ENCODE measurements at regions of chr12 and their contacts with region 1.

Region 1: DNA sequence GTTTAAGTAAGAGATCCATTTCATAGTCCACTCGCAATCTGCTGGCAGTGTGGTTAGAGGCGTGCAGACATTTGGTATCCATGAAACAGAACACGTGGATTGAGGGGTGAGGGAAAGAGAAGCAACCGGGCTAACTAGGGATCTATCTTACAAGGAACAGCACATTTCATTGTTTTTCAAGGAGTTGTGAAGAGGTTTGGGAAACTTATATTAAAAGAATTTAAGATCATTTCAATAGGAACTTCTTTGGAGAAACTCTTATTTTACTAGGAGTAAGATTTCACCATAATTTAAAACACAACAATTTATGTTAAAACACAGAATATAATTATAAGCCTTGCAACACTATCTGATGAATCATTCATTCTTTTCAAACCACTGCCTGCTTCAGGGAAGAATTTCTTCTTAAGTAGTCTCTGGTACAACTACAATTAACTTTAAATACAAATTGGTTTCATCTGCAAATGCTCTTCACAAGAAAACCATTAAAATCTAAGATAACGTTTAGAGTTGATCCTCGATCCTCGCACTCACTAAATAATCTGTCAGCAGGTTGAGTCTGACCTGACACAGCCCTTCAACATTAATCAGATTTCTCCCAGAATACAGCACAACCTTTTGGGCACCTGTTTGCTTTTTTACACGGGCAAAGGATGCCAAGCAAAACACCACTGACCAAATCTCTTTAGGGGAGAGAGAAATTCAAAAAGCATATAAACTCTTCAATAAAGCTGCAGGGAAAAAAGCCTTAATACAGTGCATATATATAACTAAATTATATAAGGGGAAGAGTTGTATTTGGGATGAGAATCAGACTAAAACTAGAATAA is 27.3 kb downstream of the PPTC7 start:
- DNase-seq: no peak
- H3K4me3 ChIP-seq: no peak overlapping the region
- H3K4me3 Mint-ChIP-seq: peak overlapping the region in 1 of 8 donors; percentile 3
- H3K27ac ChIP-seq: no peak overlapping the region
- H3K27ac Mint-ChIP-seq: peak overlapping the region in 4 of 7 donors; percentile 17 to 71 (median 25)
- H3K4me1 ChIP-seq: peaks cover 44% of the 10 kb centered on the region
- H3K4me1 Mint-ChIP-seq: peaks cover 35 to 62% (median 51%) of the 10 kb centered on the region in 4 donors
- H3K27me3 ChIP-seq: no peaks in the 10 kb centered on the region
- H3K27me3 Mint-ChIP-seq: no peaks in the 10 kb centered on the region

Region 2: DNA sequence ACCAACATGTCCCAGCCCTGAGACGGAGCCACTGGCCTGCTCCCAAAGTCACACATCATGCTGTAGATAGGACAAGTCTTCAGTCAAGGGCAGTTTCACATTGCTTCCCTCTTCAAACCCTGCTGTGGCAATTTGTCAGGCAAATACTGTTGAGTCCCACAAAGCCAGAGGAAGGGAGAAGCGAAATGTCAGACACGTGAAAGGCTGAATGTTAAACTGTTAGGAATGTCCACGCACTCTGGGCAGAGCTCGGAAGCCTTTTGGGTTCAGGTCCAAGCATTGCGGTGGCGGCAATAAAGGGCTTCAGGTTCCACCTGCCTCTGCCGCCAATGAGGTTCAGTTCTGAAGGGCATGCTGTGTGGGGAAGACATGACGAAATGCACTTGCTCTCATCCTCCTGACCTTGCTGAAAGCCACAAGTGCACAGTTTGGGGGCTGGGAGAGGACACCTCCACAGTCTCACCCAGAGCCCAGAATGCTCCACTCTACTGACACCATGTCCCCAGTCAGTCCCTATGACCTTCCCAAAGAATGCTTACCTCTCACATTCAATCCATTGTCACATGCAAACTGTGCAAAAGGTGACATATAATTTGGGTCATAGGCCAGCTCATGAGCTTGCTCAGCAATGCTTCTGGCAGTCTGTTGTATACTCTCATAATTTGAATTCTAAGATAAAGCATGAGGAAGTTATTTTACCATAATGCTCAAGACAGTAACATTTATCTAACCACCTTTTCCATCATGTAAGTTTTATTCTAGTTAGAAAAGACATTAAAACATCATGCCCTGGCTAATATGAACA is 18.0 kb before region 1 on chr12:
- CTCF ChIA-PET with region 1: interaction called, 11 read pairs
- POLR2A ChIA-PET with region 1: interaction called, 3 read pairs
- intact Hi-C with region 1: no loop called
- DNase-seq: no peak
- H3K4me3 ChIP-seq: no peak overlapping the region
- H3K4me3 Mint-ChIP-seq: no peak overlapping the region
- H3K27ac ChIP-seq: no peak overlapping the region
- H3K27ac Mint-ChIP-seq: peak overlapping the region in 1 of 7 donors; percentile 35
- H3K4me1 ChIP-seq: no peaks in the 10 kb centered on the region
- H3K4me1 Mint-ChIP-seq: peaks cover 0 to 2% (median 1%) of the 10 kb centered on the region in 4 donors
- H3K27me3 ChIP-seq: no peaks in the 10 kb centered on the region
- H3K27me3 Mint-ChIP-seq: no peaks in the 10 kb centered on the region

Region 3: DNA sequence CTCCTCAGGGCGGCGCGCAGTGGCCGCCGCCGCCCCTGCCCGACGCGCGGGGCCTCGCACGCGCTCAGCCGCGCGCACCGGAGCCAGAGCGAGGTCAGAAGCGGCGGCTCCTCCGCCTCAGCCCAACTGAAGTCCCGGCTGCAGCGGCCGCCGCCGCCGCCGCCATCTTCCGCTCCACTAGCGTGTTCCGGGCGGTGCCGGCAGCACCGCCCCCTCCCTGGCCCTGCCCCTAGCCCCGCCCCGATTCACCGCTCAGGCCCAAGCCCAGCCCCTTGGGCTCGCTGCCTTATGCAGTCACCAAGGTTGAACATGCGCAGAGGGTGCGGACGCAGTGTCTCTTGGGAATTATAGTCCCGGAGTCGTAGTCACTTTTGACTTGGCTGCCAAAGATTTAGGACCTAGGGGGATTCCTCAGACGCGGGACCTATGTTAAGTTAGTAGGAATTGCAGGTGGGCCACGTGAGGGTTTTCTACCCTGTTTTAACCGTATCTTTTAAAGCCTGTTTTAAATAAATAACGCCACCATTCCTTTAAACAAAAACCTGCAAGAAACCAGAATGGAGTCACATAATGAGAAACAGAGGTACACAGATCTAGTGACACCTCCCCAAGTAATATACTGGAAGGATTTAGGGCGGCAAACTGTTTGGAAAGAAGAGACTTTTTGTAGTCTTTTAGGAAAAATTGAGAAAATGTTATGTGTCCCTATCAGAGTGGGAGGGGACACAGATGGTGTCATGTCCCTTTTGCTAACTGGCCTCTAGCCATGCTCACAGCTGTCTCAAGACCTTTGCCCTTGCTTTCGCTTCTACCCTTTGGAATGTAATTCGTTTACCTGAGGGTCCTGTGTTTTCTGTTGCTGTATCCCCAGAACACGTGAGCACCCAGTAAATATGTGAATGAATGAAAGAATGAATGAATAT is 27.6 kb after region 1 on chr12 and contains the start of gene PPTC7:
- CTCF ChIA-PET with region 1: interaction called, 14 read pairs
- POLR2A ChIA-PET with region 1: interaction called, 3 read pairs
- intact Hi-C with region 1: loop called (anchors 2 kb)
- DNase-seq: peak; percentile 91 to 97 (median 94)
- H3K4me3 ChIP-seq: peak within 1 kb of the TSS; percentile 77 to 84
- H3K4me3 Mint-ChIP-seq: peak within 1 kb of the TSS; percentile 89 to 98 (median 96)
- H3K27ac ChIP-seq: peak within 1 kb of the TSS; percentile 93
- H3K27ac Mint-ChIP-seq: peak within 1 kb of the TSS; percentile 94 to 97 (median 96)
- H3K4me1 ChIP-seq: peaks cover 62% of the 10 kb centered on the region
- H3K4me1 Mint-ChIP-seq: peaks cover 47 to 73% (median 61%) of the 10 kb centered on the region in 4 donors
- H3K27me3 ChIP-seq: no peaks in the 10 kb centered on the region
- H3K27me3 Mint-ChIP-seq: no peaks in the 10 kb centered on the region
- total RNA-seq, gene PPTC7: 32.6 to 35.6 TPM

Region 4: GRCh38 chr12:110698171-110698902 is 142.5 kb after region 1 on chr12:
- CTCF ChIA-PET with region 1: interaction called, 5 read pairs
- POLR2A ChIA-PET with region 1: no interaction called
- intact Hi-C with region 1: loop called (anchors 1 kb)
- DNase-seq: peak; percentile 75 to 80 (median 78)
- H3K4me3 ChIP-seq: no peak overlapping the region
- H3K4me3 Mint-ChIP-seq: peak overlapping the region in 2 of 8 donors; percentile 46 to 48
- H3K27ac ChIP-seq: no peak overlapping the region
- H3K27ac Mint-ChIP-seq: peak overlapping the region in 4 of 7 donors; percentile 45 to 90 (median 64)
- H3K4me1 ChIP-seq: peaks cover 9% of the 10 kb centered on the region
- H3K4me1 Mint-ChIP-seq: peaks cover 4 to 11% (median 6%) of the 10 kb centered on the region in 4 donors
- H3K27me3 ChIP-seq: no peaks in the 10 kb centered on the region
- H3K27me3 Mint-ChIP-seq: no peaks in the 10 kb centered on the region

Measured in CD4-positive, alpha-beta memory T cell (primary cell).